Mammary epithelial cell (primary cell): ENCODE measurements at regions of chr11 and their contacts with region 1.

Region 1: DNA sequence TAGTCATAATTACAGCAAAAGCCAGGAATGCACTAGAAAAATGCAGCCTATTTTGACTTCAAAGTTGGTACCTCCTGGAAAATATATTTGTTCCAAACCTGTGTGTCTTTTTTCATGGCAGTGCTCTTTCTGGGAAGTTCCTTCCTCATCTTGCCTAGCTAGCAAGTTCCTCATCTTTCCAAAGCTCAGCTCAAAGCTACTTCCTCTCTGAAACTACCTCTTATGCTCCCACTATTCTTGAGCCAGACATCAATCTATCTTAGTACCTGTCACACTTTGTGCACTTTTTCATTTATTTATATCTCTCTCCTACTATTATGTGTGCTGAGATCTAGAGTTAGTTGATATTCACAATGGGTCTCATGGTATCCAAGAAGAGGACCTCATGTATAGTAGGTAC is 191.6 kb upstream of the CCDC90B start:
- DNase-seq: no peak
- H3K4me3 ChIP-seq: no peak overlapping the region
- H3K27ac ChIP-seq: no peak overlapping the region
- H3K4me1 ChIP-seq: no peaks in the 10 kb centered on the region
- H3K27me3 ChIP-seq: no peaks in the 10 kb centered on the region
- CTCF ChIP-seq: no peak

Region 2: GRCh38 chr11:83349296-83349695 is 128.5 kb before region 1 on chr11:
- CTCF ChIA-PET with region 1: no interaction called
- dilution Hi-C with region 1: no loop called
- in situ Hi-C with region 1: no loop called
- intact Hi-C with region 1: no loop called
- DNase-seq: no peak
- H3K4me3 ChIP-seq: no peak overlapping the region
- H3K27ac ChIP-seq: no peak overlapping the region
- H3K4me1 ChIP-seq: no peaks in the 10 kb centered on the region
- H3K27me3 ChIP-seq: no peaks in the 10 kb centered on the region
- CTCF ChIP-seq: no peak

Region 3: GRCh38 chr11:83392556-83392955 is 85.2 kb before region 1 on chr11:
- CTCF ChIA-PET with region 1: no interaction called
- dilution Hi-C with region 1: no loop called
- in situ Hi-C with region 1: no loop called
- intact Hi-C with region 1: no loop called
- DNase-seq: no peak
- H3K4me3 ChIP-seq: no peak overlapping the region
- H3K27ac ChIP-seq: no peak overlapping the region
- H3K4me1 ChIP-seq: no peaks in the 10 kb centered on the region
- H3K27me3 ChIP-seq: no peaks in the 10 kb centered on the region
- CTCF ChIP-seq: no peak

Region 4: DNA sequence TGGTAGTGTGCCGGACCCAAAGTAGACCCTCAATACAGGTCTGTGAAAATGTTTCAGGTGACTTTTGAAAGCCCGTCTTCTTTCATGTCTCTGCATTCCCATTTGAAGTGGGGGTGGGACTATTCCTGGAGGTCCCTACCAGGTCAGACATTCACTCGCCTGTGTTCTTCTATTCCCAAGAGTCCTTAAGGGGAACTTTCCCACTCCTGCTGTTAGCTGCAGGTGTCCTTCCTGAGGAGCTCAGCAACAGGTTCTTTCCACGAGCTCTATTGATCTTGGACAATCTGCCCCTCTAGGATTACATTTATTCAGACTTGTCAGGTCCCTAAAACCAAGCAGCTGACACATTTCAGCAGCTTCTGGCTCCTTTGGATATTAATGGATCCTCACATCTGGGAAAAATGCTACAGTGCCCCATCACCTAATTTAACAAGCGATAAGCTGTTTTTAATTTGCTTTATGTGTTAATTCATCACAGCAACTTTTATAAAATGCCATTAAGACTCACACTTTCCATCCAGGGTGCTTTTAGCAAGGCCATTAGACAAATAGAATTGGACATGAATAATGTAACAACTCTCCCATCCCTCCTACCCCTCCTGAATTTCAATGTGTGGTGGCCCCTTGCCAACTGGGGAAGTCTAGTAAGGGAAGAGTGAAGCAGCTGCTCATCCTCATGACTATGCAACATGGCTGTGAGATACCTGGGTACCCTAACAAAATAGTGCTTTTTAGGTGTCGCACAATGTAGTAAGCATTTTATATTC is 67.9 kb after region 1 on chr11:
- CTCF ChIA-PET with region 1: no interaction called
- dilution Hi-C with region 1: loop called (anchors 5 kb)
- in situ Hi-C with region 1: no loop called
- intact Hi-C with region 1: no loop called
- DNase-seq: no peak
- H3K4me3 ChIP-seq: no peak overlapping the region
- H3K27ac ChIP-seq: no peak overlapping the region
- H3K4me1 ChIP-seq: no peaks in the 10 kb centered on the region
- H3K27me3 ChIP-seq: no peaks in the 10 kb centered on the region
- CTCF ChIP-seq: no peak